Ascending aorta (tissue), 2 donors: ENCODE measurements at regions of chr1 and their contacts with region 1.

Region 1: GRCh38 chr1:86704458-86704971 is at the start of gene SH3GLB1:
- DNase-seq: peak; percentile 28 to 92
- H3K4me3 ChIP-seq: peak within 1 kb of the TSS; percentile 79 to 90
- H3K27ac ChIP-seq: peak within 1 kb of the TSS; percentile 93 to 97
- H3K4me1 ChIP-seq: peaks cover 4 to 29% of the 10 kb centered on the region in 2 donors
- H3K27me3 ChIP-seq: no peaks in the 10 kb centered on the region
- CTCF ChIP-seq: peak; percentile 86 to 96 (median 90)
- total RNA-seq, gene SH3GLB1: 28.9 TPM

Region 2: GRCh38 chr1:86395771-86396497 is 308.6 kb before region 1 on chr1 and contains the start of gene ODF2L:
- intact Hi-C with region 1: loop called (anchors 10 kb)
- DNase-seq: peak; percentile 78 to 94
- H3K4me3 ChIP-seq: peak within 1 kb of the TSS; percentile 52 to 76
- H3K27ac ChIP-seq: peak within 1 kb of the TSS; percentile 57 to 70
- H3K4me1 ChIP-seq: peaks cover 0 to 4% of the 10 kb centered on the region in 2 donors
- H3K27me3 ChIP-seq: no peaks in the 10 kb centered on the region
- CTCF ChIP-seq: no peak
- total RNA-seq, gene ODF2L: 6.2 TPM

Region 3: GRCh38 chr1:86741947-86742572 is 37.5 kb after region 1 on chr1:
- intact Hi-C with region 1: loop called (anchors 2 kb)
- DNase-seq: no peak
- H3K4me3 ChIP-seq: no peak overlapping the region
- H3K27ac ChIP-seq: no peak overlapping the region
- H3K4me1 ChIP-seq: no peaks in the 10 kb centered on the region
- H3K27me3 ChIP-seq: no peaks in the 10 kb centered on the region
- CTCF ChIP-seq: peak in 2 of 3 experiments; percentile 49 to 62

Region 4: GRCh38 chr1:86913896-86914634 is 209.6 kb after region 1 on chr1 and contains the start of gene SELENOF:
- intact Hi-C with region 1: loop called (anchors 1 kb)
- DNase-seq: peak; percentile 99 to 100
- H3K4me3 ChIP-seq: peak within 1 kb of the TSS; percentile 82 to 85
- H3K27ac ChIP-seq: peak within 1 kb of the TSS; percentile 82 to 92
- H3K4me1 ChIP-seq: peaks cover 0 to 17% of the 10 kb centered on the region in 2 donors
- H3K27me3 ChIP-seq: no peaks in the 10 kb centered on the region
- CTCF ChIP-seq: no peak
- total RNA-seq, gene SELENOF: 124 TPM

Region 5: DNA sequence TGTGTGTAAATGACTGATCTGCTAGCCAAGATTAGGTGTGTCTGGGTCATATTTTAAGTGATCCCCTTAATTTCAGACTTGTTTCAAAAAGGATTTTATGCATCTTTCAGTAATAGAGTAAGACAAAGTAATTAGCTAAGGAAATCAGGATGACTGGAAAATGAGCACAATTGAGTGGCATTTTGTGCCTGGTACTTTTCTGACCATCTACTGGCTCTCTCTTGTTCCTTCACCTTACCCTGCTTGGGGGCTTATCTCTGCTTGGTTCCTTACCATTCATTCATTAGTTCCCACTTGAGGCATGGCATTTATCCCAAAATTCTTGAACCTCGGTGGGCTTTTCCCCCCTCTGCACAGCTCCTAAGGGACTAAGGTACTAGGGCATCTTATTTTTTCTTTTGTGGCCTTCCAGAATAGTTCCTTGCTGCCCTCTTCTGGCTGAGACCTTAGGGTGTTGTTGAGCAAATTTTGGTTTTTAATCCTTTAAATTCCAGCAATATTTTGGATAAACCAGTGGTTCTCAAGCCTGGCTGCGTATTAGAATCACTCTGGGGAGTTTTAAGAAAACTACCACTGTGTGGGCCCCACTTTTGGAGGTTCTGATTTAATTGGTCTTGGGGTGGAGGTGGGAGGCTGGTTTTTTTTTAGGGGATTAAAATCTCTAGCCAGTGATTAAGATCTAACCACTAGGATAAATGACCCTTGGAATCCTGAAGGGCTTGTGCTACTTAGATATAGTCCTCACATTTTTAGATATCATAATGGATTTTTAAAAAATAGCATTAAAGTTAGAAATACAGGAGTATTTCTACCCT is 260.7 kb after region 1 on chr1:
- intact Hi-C with region 1: loop called (anchors 10 kb)
- DNase-seq: no peak
- H3K4me3 ChIP-seq: no peak overlapping the region
- H3K27ac ChIP-seq: no peak overlapping the region
- H3K4me1 ChIP-seq: no peaks in the 10 kb centered on the region
- H3K27me3 ChIP-seq: no peaks in the 10 kb centered on the region
- CTCF ChIP-seq: peak in 2 of 3 experiments; percentile 48 to 73

Region 6: GRCh38 chr1:87084244-87084836 is 379.8 kb after region 1 on chr1:
- intact Hi-C with region 1: loop called (anchors 10 kb)
- DNase-seq: no peak
- H3K4me3 ChIP-seq: no peak overlapping the region
- H3K27ac ChIP-seq: no peak overlapping the region
- H3K4me1 ChIP-seq: no peaks in the 10 kb centered on the region
- H3K27me3 ChIP-seq: no peaks in the 10 kb centered on the region
- CTCF ChIP-seq: peak; percentile 16 to 68 (median 62)

Region 7: GRCh38 chr1:87335175-87335884 is 630.8 kb after region 1 on chr1:
- intact Hi-C with region 1: loop called (anchors 10 kb)
- DNase-seq: peak in 1 of 2 donors; percentile 81
- H3K4me3 ChIP-seq: peak overlapping the region; percentile 84 to 94
- H3K27ac ChIP-seq: peak overlapping the region; percentile 77 to 95
- H3K4me1 ChIP-seq: peaks cover 6 to 10% of the 10 kb centered on the region in 2 donors
- H3K27me3 ChIP-seq: no peaks in the 10 kb centered on the region
- CTCF ChIP-seq: peak in 1 of 3 experiments; percentile 43